ENCODE measurements at regions of chr10 and their contacts with region 1.

Region 1: GRCh38 chr10:107164992-107165391 is 486 bp upstream of the SORCS1 start:
- DNase-seq: no peak
- H3K4me3 ChIP-seq: no peak overlapping the region
- H3K27ac ChIP-seq: no peak overlapping the region
- H3K4me1 ChIP-seq: no peaks in the 10 kb centered on the region
- CTCF ChIP-seq: no peak

Region 2: DNA sequence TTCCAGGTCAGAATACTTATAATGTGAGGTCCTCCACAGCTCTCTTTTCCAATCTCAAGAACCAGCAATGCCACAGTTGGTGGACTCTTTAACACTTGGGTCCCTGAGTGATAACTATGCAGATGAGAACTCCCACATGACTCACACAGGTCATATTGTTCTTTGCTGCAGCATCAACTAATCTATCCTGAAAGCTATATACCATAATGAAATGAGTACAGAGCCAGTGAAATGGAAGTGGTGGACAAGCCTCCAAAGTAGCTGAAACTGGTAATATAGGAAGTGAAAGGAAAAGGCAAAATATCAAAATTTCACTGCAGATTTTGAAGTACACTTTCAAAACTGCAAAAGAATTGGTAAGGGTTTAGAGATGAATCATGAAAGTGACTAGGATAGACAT is 46.1 kb before region 1 on chr10:
- CTCF ChIA-PET with region 1: no interaction called
- POLR2A ChIA-PET with region 1: no interaction called
- intact Hi-C with region 1: loop called (anchors 5 kb)
- DNase-seq: no peak
- H3K4me3 ChIP-seq: no peak overlapping the region
- H3K27ac ChIP-seq: no peak overlapping the region
- H3K4me1 ChIP-seq: no peaks in the 10 kb centered on the region
- CTCF ChIP-seq: no peak